AG04450 (cell line): ENCODE measurements at regions of chr10 and their contacts with region 1.

Region 1: DNA sequence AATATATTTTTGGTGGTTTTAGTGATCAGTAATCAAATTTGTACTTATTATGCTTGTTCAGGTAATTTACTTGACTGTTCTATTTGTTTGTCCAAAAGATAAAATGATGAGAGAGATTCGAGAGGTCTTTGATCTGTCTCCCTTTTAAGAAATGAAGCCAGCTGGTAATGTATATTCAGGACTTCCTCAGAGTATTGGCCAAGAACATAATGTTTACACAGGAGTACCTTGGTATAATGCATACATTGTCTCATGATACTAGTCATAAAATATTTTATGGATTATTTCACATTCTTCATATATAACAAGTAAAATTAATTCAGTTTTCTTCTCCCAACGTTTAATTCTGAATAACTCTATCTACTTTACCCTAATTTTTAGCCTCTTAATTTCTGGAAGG is 100.9 kb downstream of the REEP3 start:
- DNase-seq: no peak
- H3K4me3 ChIP-seq: no peak overlapping the region
- H3K27ac ChIP-seq: no peak overlapping the region
- H3K27me3 ChIP-seq: no peaks in the 10 kb centered on the region
- CTCF ChIP-seq: no peak

Region 2: DNA sequence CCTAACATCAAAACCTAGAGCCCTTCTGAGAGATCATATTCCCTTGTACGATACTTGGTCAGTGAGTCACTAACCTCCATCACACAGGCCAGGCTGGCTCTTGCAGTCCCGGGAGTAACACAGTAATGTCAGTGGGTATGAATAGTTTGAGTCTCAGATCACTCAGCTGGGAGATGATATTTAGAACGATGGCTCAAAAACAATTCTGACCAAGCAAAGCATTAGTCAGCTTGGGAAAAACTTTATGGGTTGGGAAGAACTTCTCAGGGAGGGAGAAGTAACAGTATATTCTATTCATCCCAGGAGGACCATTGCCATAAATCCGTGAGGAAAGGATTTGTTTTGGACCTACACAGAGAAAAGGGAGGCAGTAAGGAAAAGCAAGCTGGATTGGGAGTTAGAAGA is 78.1 kb after region 1 on chr10:
- CTCF ChIA-PET with region 1: interaction called, 13 read pairs
- POLR2A ChIA-PET with region 1: no interaction called
- DNase-seq: peak; percentile 92
- H3K4me3 ChIP-seq: no peak overlapping the region
- H3K27ac ChIP-seq: peak overlapping the region; percentile 74
- H3K27me3 ChIP-seq: no peaks in the 10 kb centered on the region
- CTCF ChIP-seq: no peak